Right cardiac atrium (tissue), 5 donors: ENCODE measurements at regions of chr1 and their contacts with region 1.

Region 1: DNA sequence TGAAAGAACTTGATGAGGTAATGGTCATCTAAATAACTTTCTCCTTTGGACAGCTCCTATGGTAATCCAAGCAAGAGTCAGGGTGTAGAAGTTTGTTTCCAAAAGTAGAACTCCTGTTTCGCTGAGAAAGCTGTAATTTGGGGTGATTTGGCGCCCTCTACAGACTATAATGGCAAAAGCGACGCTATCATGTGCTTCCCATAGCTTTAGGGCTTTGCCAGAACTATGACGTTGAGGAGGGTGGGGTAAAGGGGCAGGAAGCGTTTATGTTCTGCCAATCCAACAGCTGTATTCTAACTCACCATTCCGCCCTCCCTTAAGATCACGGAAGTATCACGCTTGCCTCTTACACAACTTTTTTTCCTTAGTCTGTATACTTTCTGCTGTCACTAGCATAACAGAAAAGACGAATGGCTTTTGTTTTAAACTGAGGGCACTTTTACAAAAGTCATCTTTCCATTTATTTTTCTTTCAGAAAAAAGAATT is at the start of gene FMO4:
- DNase-seq: peak; percentile 82 to 88 (median 84)
- ATAC-seq: peak; percentile 100
- H3K4me3 ChIP-seq: peak within 1 kb of the TSS; percentile 70
- H3K27ac ChIP-seq: no peak within 1 kb of the TSS
- H3K4me1 ChIP-seq: no peaks in the 10 kb centered on the region
- H3K27me3 ChIP-seq: no peaks in the 10 kb centered on the region
- total RNA-seq, gene FMO4: 2.8 to 6.3 (median 4.1) TPM

Region 2: GRCh38 chr1:171081314-171081753 is 232.5 kb before region 1 on chr1:
- intact Hi-C with region 1: loop called in 1 of 4 experiments (anchors 10 kb)
- DNase-seq: no peak
- ATAC-seq: peak; percentile 42 to 66
- H3K4me3 ChIP-seq: no peak overlapping the region
- H3K27ac ChIP-seq: peak overlapping the region; percentile 61
- H3K4me1 ChIP-seq: peaks cover 4% of the 10 kb centered on the region
- H3K27me3 ChIP-seq: no peaks in the 10 kb centered on the region

Region 3: DNA sequence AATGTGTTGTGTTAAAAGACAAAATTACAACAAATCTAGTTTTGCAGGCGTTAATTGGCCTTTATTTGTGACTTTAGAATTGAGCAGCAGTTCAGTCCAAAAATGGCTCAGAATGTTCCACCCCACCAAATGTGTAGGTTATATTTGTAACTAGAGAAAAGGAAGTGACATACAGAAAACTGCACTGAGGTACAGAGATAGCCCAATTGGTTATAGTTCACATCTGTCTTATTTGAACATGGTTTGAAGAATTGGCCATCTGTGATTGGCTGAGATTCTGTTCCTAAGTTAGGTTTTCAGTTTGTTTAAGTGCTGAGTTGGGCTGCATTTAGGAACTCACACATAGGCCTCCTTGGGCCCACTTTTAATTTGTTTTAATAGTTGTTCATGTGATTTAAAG is 140.8 kb before region 1 on chr1:
- intact Hi-C with region 1: no loop called
- DNase-seq: no peak
- ATAC-seq: no peak
- H3K4me3 ChIP-seq: no peak overlapping the region
- H3K27ac ChIP-seq: no peak overlapping the region
- H3K4me1 ChIP-seq: no peaks in the 10 kb centered on the region
- H3K27me3 ChIP-seq: no peaks in the 10 kb centered on the region

Region 4: GRCh38 chr1:171245458-171246064 is 68.3 kb before region 1 on chr1:
- intact Hi-C with region 1: loop called in 3 of 4 experiments (anchors 5 kb)
- DNase-seq: no peak
- ATAC-seq: peak in 1 of 2 donors; percentile 67
- H3K4me3 ChIP-seq: no peak overlapping the region
- H3K27ac ChIP-seq: no peak overlapping the region
- H3K4me1 ChIP-seq: no peaks in the 10 kb centered on the region
- H3K27me3 ChIP-seq: no peaks in the 10 kb centered on the region

Region 5: GRCh38 chr1:171251042-171251951 is 62.6 kb before region 1 on chr1:
- intact Hi-C with region 1: loop called in 3 of 4 experiments (anchors 5 kb)
- DNase-seq: peak; percentile 41 to 70 (median 66)
- ATAC-seq: peak; percentile 32 to 58
- H3K4me3 ChIP-seq: peak overlapping the region; percentile 81
- H3K27ac ChIP-seq: no peak overlapping the region
- H3K4me1 ChIP-seq: no peaks in the 10 kb centered on the region
- H3K27me3 ChIP-seq: no peaks in the 10 kb centered on the region

Region 6: DNA sequence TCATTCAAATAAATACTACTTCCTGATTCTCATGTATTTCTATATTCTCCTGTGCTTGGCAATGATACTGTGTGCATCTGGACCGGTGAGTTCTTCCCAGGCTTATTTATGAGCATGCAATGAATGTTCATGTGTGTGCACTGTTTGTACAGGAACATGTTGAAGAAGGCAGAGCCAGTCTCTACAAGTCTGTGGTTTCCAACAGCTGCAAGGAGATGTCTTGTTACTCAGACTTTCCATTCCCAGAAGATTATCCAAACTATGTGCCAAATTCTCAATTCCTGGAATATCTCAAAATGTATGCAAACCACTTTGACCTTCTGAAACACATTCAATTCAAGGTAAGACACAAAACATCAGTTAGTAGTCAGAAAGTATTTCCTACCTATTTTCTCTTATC is 46.5 kb before region 1 on chr1:
- intact Hi-C with region 1: no loop called
- DNase-seq: no peak
- ATAC-seq: no peak
- H3K4me3 ChIP-seq: no peak overlapping the region
- H3K27ac ChIP-seq: no peak overlapping the region
- H3K4me1 ChIP-seq: no peaks in the 10 kb centered on the region
- H3K27me3 ChIP-seq: no peaks in the 10 kb centered on the region